Mucosa of descending colon (tissue), 3 donors: ENCODE measurements at regions of chr4 and their contacts with region 1.

Region 1: GRCh38 chr4:151362404-151363164 is 37.2 kb upstream of the SH3D19 start:
- DNase-seq: peak; percentile 71 to 90 (median 86)
- ATAC-seq: peak; percentile 97
- H3K4me3 ChIP-seq: no peak overlapping the region
- H3K4me1 ChIP-seq: no peaks in the 10 kb centered on the region
- CTCF ChIP-seq: peak; percentile 90

Region 2: DNA sequence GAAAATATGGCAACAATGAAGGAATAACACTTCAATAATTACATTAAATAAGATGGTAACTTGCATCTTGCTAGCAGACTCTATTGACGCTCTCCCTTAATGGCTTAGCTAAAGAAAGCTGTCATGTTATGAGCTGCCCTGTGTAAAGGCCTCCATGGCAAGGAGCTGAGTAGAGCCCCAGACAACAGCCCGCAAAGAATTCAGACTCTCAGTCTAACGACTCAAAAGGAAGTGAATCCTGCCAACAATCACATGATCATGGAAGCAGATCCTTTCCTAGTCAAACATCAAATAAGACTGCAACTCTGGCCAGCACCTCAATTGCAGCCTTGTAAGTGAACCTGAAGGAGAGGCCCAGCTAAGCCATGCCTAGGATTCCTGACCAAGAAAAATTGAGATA is 623.0 kb before region 1 on chr4:
- intact Hi-C with region 1: no loop called
- DNase-seq: no peak
- ATAC-seq: no peak
- H3K4me3 ChIP-seq: no peak overlapping the region
- H3K4me1 ChIP-seq: no peaks in the 10 kb centered on the region
- CTCF ChIP-seq: no peak

Region 3: DNA sequence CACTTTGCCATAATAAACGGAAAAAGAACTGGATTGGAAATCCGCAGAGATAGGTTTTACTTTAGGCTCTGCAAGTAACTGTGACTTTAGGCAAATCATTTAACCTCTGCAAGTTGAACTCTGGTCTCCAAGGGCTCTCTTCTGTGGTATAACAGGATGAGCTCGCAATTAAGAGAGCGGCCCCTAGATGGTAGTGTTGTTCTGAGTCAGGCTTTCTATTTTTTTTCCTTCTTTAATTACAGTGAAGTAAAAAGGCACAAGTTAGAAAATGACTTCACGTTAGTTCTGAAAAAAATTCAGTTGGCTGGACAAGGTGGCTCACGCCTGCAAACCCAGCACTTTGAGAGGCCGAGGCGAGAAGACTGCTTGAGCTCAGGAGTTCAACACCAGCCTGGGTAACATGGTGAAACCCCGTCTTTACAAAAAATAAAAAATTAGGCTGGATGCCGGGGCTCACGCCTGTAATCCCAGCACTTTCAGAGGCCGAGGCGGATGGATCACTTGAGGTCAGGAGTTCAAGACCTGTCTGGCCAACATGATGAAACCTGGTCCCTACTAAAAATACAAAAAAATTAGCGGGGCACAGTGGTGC is 245.1 kb before region 1 on chr4:
- intact Hi-C with region 1: loop called in 1 of 2 experiments (anchors 5 kb)
- DNase-seq: peak in 1 of 3 donors; percentile 85
- ATAC-seq: peak; percentile 89
- H3K4me3 ChIP-seq: no peak overlapping the region
- H3K4me1 ChIP-seq: no peaks in the 10 kb centered on the region
- CTCF ChIP-seq: peak; percentile 25

Region 4: GRCh38 chr4:151284534-151285245 is 77.9 kb before region 1 on chr4:
- intact Hi-C with region 1: loop called in 1 of 2 experiments (anchors 10 kb)
- DNase-seq: no peak
- ATAC-seq: no peak
- H3K4me3 ChIP-seq: no peak overlapping the region
- H3K4me1 ChIP-seq: no peaks in the 10 kb centered on the region
- CTCF ChIP-seq: no peak

Region 5: DNA sequence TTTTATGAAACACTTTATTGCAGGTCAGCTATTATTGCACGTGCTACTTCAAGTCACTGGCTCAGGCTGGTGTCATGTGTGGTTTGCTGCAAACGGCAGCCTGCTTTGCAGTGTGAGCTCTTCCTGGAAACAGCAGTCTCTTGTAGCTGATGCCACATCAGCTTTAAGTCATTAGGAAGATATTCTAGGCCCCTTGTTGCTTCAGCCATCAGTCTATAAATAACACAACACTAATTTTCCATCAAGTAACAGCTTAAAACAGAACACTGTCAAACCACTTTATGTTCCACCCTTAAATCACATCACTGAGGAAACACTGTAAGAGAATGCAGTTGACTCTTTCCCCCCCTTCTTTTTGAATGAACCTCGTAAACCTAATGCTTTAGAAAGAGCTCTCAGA is 304.5 kb after region 1 on chr4:
- intact Hi-C with region 1: no loop called
- DNase-seq: no peak
- ATAC-seq: no peak
- H3K4me3 ChIP-seq: no peak overlapping the region
- H3K4me1 ChIP-seq: no peaks in the 10 kb centered on the region
- CTCF ChIP-seq: no peak